ENCODE measurements at regions of chr9 and their contacts with region 1.

Region 1: GRCh38 chr9:124420991-124421543 is 5.8 kb upstream of the PSMB7 start:
- DNase-seq: no peak
- H3K4me3 ChIP-seq: no peak overlapping the region
- CTCF ChIP-seq: no peak

Region 2: DNA sequence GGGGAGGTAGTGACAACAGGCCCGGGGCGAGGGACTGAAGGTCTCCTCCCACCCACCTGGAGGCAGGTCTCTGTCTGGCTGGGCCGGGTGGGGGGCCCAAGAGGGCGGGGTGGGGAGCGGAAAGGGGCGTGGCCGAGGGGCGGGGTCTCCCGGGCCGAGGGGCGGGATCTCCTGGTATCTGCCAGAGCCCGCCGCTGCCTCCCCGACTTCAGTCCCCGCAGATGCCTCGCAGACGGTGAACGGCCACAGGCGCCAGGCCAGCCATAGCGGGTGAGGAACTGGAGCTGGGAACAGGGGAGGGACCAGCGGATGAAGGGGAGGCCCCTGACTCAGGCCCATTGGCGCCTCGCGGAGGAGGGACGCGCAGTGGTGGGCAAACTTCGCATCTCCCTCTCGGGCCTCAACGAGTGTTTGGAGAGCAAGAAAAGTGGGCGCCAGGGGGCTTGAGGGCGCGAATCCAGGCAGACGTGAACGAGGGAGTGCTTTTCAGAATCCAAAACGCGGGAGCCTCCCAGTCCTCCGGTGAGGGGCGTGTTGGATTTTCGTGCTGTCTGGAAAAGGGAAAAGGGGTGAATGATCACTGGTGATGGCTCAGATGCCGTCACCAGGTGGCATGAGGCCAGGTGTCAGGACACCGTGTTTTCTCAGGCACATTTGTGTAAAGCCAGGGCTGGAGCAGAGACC is 29.3 kb after region 1 on chr9 and contains the start of gene ADGRD2:
- CTCF ChIA-PET with region 1: interaction called, 12 read pairs
- POLR2A ChIA-PET with region 1: no interaction called
- DNase-seq: no peak
- H3K4me3 ChIP-seq: peak within 1 kb of the TSS; percentile 15; the same call in 1 of the 2 replicates
- CTCF ChIP-seq: no peak

Region 3: GRCh38 chr9:124764774-124765438 is 343.8 kb after region 1 on chr9:
- CTCF ChIA-PET with region 1: interaction called, 27 read pairs
- POLR2A ChIA-PET with region 1: no interaction called
- DNase-seq: no peak
- H3K4me3 ChIP-seq: no peak overlapping the region
- CTCF ChIP-seq: peak; percentile 20

Measured in AG04449 (cell line).